Spleen (tissue), 13 donors: ENCODE measurements at regions of chr10 and their contacts with region 1.

Region 1: GRCh38 chr10:43299579-43299978 is 32.7 kb upstream of the RASGEF1A start:
- DNase-seq: no peak
- H3K4me3 ChIP-seq: no peak overlapping the region
- H3K27ac ChIP-seq: peak overlapping the region in 3 of 8 donors; percentile 8 to 65 (median 54)
- H3K4me1 ChIP-seq: peaks cover 0 to 38% (median 12%) of the 10 kb centered on the region in 6 donors
- H3K27me3 ChIP-seq: peaks cover 0 to 19% (median 0%) of the 10 kb centered on the region in 7 donors
- CTCF ChIP-seq: no peak
- POLR2A ChIP-seq: no peak

Region 2: GRCh38 chr10:43237631-43238446 is 61.7 kb before region 1 on chr10:
- intact Hi-C with region 1: no loop called
- DNase-seq: peak; percentile 51
- H3K4me3 ChIP-seq: no peak overlapping the region
- H3K27ac ChIP-seq: no peak overlapping the region
- H3K4me1 ChIP-seq: no peaks in the 10 kb centered on the region
- H3K27me3 ChIP-seq: peaks cover 0 to 13% (median 0%) of the 10 kb centered on the region in 7 donors
- CTCF ChIP-seq: no peak
- POLR2A ChIP-seq: no peak

Region 3: GRCh38 chr10:43340619-43341018 is 41.0 kb after region 1 on chr10:
- intact Hi-C with region 1: loop called (anchors 5 kb)
- DNase-seq: no peak
- H3K4me3 ChIP-seq: no peak overlapping the region
- H3K27ac ChIP-seq: no peak overlapping the region
- H3K4me1 ChIP-seq: peaks cover 0 to 36% (median 14%) of the 10 kb centered on the region in 6 donors
- H3K27me3 ChIP-seq: peaks cover 0 to 15% (median 0%) of the 10 kb centered on the region in 7 donors
- CTCF ChIP-seq: no peak
- POLR2A ChIP-seq: no peak

Region 4: DNA sequence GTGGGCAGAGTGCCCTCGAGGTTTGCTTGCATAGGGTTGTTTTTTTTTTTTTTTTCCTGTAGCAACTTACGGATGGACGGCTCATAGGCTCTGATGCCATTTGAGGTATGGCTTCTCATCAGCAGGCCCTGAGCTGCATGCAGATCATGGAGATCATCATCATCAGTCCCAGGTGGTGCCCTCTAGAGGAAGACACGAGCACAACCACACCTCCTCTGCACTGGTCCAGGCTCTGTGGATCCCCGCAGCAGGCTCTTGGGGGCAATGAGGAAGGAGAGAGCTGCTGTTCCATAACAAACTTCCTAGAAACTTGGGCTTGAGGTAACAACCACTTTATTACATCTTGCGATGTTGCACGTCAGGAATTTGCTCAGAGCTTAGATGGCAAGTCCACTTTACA is 1218.1 kb after region 1 on chr10:
- intact Hi-C with region 1: no loop called
- DNase-seq: no peak
- H3K4me3 ChIP-seq: no peak overlapping the region
- H3K27ac ChIP-seq: no peak overlapping the region
- H3K4me1 ChIP-seq: no peaks in the 10 kb centered on the region
- H3K27me3 ChIP-seq: no peaks in the 10 kb centered on the region
- CTCF ChIP-seq: no peak
- POLR2A ChIP-seq: no peak